Sciatic nerve (tissue), 2 donors: ENCODE measurements at regions of chr4 and their contacts with region 1.

Region 1: DNA sequence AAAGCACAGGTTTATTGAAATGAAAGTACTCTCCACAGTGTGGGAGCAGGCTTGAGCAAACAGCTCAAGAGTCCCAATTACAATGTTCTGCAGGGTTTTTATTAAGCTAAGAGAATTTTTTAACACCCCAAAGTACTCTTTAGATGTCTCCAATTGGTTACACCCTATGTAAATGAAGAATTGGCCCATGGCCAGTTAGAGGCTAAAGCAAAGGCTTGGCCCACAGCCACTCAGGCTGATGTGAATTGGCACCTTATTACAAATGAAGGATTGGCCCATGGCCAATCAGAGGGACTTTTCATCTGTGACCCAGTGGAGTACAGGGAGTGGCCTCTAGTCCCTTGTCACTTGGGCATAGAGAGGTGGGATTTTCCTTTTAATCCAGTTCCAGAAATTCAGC is 30.1 kb upstream of the IQCM start:
- DNase-seq: no peak
- ATAC-seq: no peak

Region 2: GRCh38 chr4:149912000-149912399 is 66.3 kb after region 1 on chr4:
- intact Hi-C with region 1: loop called (anchors 2 kb)
- DNase-seq: no peak
- ATAC-seq: no peak